Right cardiac atrium (tissue), 5 donors: ENCODE measurements at regions of chr1 and their contacts with region 1.

Region 1: GRCh38 chr1:233025157-233025915 is 74.9 kb downstream of the NTPCR start:
- DNase-seq: peak in 2 of 3 donors; percentile 57 to 60
- ATAC-seq: peak; percentile 32 to 53
- H3K4me3 ChIP-seq: no peak overlapping the region
- H3K27ac ChIP-seq: no peak overlapping the region
- H3K4me1 ChIP-seq: no peaks in the 10 kb centered on the region
- H3K27me3 ChIP-seq: no peaks in the 10 kb centered on the region

Region 2: DNA sequence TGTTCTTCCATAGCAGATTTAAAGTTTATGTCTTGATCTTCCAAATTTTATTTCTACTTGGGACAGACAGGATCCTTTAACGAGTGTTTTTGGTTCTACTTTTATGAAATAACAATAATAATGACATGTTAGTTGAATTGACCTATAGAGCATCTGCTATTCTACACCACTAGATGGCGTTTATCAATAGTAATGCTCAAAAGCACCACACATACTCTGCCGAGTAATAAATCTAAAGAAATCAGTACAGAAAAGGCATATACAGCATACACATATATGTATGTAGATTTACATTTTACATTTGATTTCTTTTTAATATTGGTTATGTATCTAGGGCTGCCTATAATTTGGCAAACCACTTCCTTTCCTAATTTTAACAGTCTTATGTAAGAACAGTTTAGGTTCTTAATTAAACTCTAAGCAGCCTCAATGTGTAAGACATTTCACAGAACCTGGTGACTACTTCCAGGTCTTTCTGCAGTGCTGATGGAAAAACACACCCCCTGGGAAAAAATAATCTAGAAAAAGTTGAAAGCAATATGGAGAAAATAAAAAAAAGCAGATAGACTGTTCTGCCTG is 389.5 kb before region 1 on chr1:
- intact Hi-C with region 1: loop called (anchors 5 to 10 kb)
- DNase-seq: no peak
- ATAC-seq: peak; percentile 64 to 69
- H3K4me3 ChIP-seq: no peak overlapping the region
- H3K27ac ChIP-seq: no peak overlapping the region
- H3K4me1 ChIP-seq: no peaks in the 10 kb centered on the region
- H3K27me3 ChIP-seq: no peaks in the 10 kb centered on the region

Region 3: GRCh38 chr1:232643251-232643650 is 382.1 kb before region 1 on chr1:
- intact Hi-C with region 1: loop called (anchors 5 to 10 kb)
- DNase-seq: no peak
- ATAC-seq: no peak
- H3K4me3 ChIP-seq: no peak overlapping the region
- H3K27ac ChIP-seq: no peak overlapping the region
- H3K4me1 ChIP-seq: no peaks in the 10 kb centered on the region
- H3K27me3 ChIP-seq: no peaks in the 10 kb centered on the region

Region 4: GRCh38 chr1:232982238-232982944 is 42.9 kb before region 1 on chr1:
- intact Hi-C with region 1: no loop called
- DNase-seq: peak; percentile 36 to 71 (median 70)
- ATAC-seq: peak; percentile 44
- H3K4me3 ChIP-seq: no peak overlapping the region
- H3K27ac ChIP-seq: no peak overlapping the region
- H3K4me1 ChIP-seq: peaks cover 3% of the 10 kb centered on the region
- H3K27me3 ChIP-seq: no peaks in the 10 kb centered on the region

Region 5: GRCh38 chr1:233166896-233167295 is 141.6 kb after region 1 on chr1:
- intact Hi-C with region 1: loop called in 1 of 4 experiments (anchors 10 kb)
- DNase-seq: no peak
- ATAC-seq: no peak
- H3K4me3 ChIP-seq: no peak overlapping the region
- H3K27ac ChIP-seq: no peak overlapping the region
- H3K4me1 ChIP-seq: no peaks in the 10 kb centered on the region
- H3K27me3 ChIP-seq: no peaks in the 10 kb centered on the region